CD4-positive, alpha-beta memory T cell (primary cell): ENCODE measurements at regions of chr6 and their contacts with region 1.

Region 1: GRCh38 chr6:391559-392440 is at the start of gene IRF4:
- DNase-seq: peak in 3 of 5 donors; percentile 19 to 26 (median 22)
- H3K4me3 ChIP-seq: peak within 1 kb of the TSS; percentile 23 to 63
- H3K4me3 Mint-ChIP-seq: peak within 1 kb of the TSS; percentile 92 to 96 (median 94)
- H3K27ac ChIP-seq: peak within 1 kb of the TSS; percentile 32
- H3K27ac Mint-ChIP-seq: peak within 1 kb of the TSS; percentile 57 to 90 (median 80)
- H3K4me1 ChIP-seq: peaks cover 36% of the 10 kb centered on the region
- H3K4me1 Mint-ChIP-seq: peaks cover 24 to 41% (median 27%) of the 10 kb centered on the region in 4 donors
- H3K27me3 ChIP-seq: no peaks in the 10 kb centered on the region
- H3K27me3 Mint-ChIP-seq: peaks cover 4 to 15% of the 10 kb centered on the region in 2 donors
- total RNA-seq, gene IRF4: 8.5 to 8.6 TPM

Region 2: DNA sequence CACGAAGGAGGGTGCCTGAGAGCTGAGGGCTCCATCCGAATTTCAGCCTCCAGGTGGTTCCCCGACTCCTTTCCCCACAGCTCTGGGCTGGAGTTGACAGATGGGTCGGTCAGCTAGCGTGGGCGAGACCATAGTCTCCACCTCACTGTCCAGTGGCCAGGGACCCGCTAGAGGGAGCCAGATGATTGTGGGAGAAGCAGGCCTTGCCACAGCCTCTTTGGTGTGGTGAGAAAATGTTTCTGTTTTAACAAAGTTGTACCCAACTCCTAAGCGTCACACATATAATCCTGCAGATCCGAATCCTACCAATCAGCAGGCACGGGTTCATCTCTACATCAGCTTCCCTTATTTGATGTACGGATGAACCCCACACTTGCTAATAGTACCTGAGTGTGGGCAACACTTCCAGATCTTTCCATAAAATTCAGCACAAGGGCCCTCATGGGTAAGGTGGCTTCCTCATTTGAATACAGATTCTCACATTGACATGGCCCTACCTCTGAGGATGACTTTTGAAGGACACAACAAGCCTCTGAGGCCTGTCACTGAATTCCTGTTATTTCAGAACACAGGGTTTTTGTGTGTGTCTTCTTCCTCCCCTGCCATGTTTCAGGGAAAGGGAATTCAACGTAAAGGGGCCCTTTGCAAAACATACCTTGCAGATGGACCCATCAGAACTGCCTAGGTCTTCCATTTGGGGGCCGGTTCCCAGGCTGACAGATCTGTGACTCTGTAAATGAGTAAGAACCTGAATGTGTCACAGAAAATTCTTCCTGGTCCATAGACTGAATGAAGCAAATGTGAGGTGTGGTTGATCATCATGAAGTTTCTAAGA is 202.8 kb before region 1 on chr6:
- CTCF ChIA-PET with region 1: interaction called, 10 read pairs
- POLR2A ChIA-PET with region 1: interaction called, 5 read pairs
- intact Hi-C with region 1: loop called (anchors 1 kb)
- DNase-seq: peak; percentile 70 to 74 (median 71)
- H3K4me3 ChIP-seq: no peak overlapping the region
- H3K4me3 Mint-ChIP-seq: peak overlapping the region in 2 of 8 donors; percentile 22 to 26
- H3K27ac ChIP-seq: no peak overlapping the region
- H3K27ac Mint-ChIP-seq: peak overlapping the region in 3 of 7 donors; percentile 35 to 43 (median 36)
- H3K4me1 ChIP-seq: peaks cover 19% of the 10 kb centered on the region
- H3K4me1 Mint-ChIP-seq: peaks cover 23 to 37% (median 31%) of the 10 kb centered on the region in 4 donors
- H3K27me3 ChIP-seq: no peaks in the 10 kb centered on the region
- H3K27me3 Mint-ChIP-seq: no peaks in the 10 kb centered on the region

Region 3: GRCh38 chr6:446418-447366 is 54.9 kb after region 1 on chr6:
- CTCF ChIA-PET with region 1: interaction called, 16 read pairs
- POLR2A ChIA-PET with region 1: interaction called, 47 read pairs
- intact Hi-C with region 1: loop called (anchors 1 kb)
- DNase-seq: peak; percentile 67 to 96 (median 76)
- H3K4me3 ChIP-seq: peak overlapping the region; percentile 28 to 60
- H3K4me3 Mint-ChIP-seq: peak overlapping the region; percentile 78 to 92 (median 82)
- H3K27ac ChIP-seq: peak overlapping the region; percentile 54
- H3K27ac Mint-ChIP-seq: peak overlapping the region; percentile 81 to 95 (median 88)
- H3K4me1 ChIP-seq: peaks cover 53% of the 10 kb centered on the region
- H3K4me1 Mint-ChIP-seq: peaks cover 33 to 54% (median 48%) of the 10 kb centered on the region in 4 donors
- H3K27me3 ChIP-seq: no peaks in the 10 kb centered on the region
- H3K27me3 Mint-ChIP-seq: peaks cover 0 to 2% of the 10 kb centered on the region in 2 donors

Region 4: DNA sequence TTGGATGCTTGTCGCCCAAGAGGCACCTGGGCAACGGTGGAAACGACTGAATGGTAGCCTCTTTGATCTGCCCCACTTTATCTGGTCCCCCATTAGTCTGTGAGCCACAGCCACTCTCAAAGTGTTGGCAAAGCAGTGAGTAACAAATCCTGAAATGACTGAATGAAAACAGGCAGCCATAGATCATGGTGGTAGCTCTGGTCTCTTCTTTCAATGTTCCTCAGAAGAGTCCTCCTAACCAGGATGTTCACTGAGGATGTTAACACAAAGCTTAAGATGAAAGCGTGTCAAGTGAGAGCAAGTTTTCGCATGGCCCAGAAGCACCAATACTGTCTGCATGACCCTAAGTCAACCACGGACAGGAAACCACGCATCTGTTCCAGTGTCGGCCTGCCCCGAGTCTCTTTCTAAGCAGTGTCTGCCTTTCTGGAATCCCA is 107.0 kb after region 1 on chr6:
- CTCF ChIA-PET with region 1: interaction called, 5 read pairs
- POLR2A ChIA-PET with region 1: interaction called, 7 read pairs
- intact Hi-C with region 1: loop called (anchors 5 kb)
- DNase-seq: peak in 1 of 5 donors; percentile 70
- H3K4me3 ChIP-seq: peak overlapping the region in 1 of 2 donors; percentile 25
- H3K4me3 Mint-ChIP-seq: peak overlapping the region; percentile 55 to 83 (median 76)
- H3K27ac ChIP-seq: peak overlapping the region; percentile 19
- H3K27ac Mint-ChIP-seq: peak overlapping the region; percentile 19 to 94 (median 84)
- H3K4me1 ChIP-seq: peaks cover 51% of the 10 kb centered on the region
- H3K4me1 Mint-ChIP-seq: peaks cover 45 to 70% (median 59%) of the 10 kb centered on the region in 4 donors
- H3K27me3 ChIP-seq: no peaks in the 10 kb centered on the region
- H3K27me3 Mint-ChIP-seq: no peaks in the 10 kb centered on the region

Region 5: DNA sequence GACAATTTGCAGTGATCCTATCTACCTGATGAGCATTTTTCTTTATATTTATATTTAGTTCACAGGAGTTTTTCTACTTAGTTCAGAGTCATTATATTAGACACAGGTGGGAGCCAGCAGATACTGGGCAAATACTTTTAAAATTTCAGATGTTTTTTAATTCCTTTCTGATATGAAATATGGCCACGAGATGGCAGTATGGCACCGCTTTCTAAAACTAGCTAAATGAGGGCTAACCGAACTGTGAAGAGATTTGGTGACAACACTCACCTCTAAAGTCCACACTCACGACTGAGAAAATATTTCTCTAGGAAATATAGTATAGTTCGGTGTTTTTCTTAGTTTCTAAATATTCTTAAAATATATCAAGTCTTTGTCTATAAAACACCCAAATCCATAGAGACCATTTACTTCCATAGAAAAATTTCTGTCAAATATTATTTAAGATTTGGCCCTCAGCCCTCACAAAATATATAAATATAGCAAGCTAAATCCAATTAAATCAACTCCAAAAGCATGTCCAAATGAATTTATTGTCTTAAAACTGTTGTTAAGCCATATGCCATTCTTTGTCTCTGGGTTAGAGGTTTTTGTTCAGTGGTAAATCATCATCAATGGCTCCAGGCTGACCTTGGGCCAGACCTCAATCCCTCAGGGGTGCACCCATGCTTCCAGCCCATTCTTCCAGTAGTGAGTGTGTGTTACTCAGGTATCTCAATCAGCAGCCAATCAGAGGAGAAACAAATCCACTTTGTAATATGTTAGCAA is 201.5 kb after region 1 on chr6:
- CTCF ChIA-PET with region 1: interaction called, 7 read pairs
- POLR2A ChIA-PET with region 1: interaction called, 5 read pairs
- intact Hi-C with region 1: loop called (anchors 2 kb)
- DNase-seq: peak; percentile 52 to 65 (median 59)
- H3K4me3 ChIP-seq: no peak overlapping the region
- H3K4me3 Mint-ChIP-seq: no peak overlapping the region
- H3K27ac ChIP-seq: no peak overlapping the region
- H3K27ac Mint-ChIP-seq: peak overlapping the region in 2 of 7 donors; percentile 8 to 13
- H3K4me1 ChIP-seq: no peaks in the 10 kb centered on the region
- H3K4me1 Mint-ChIP-seq: peaks cover 0 to 4% (median 3%) of the 10 kb centered on the region in 4 donors
- H3K27me3 ChIP-seq: no peaks in the 10 kb centered on the region
- H3K27me3 Mint-ChIP-seq: no peaks in the 10 kb centered on the region

Region 6: DNA sequence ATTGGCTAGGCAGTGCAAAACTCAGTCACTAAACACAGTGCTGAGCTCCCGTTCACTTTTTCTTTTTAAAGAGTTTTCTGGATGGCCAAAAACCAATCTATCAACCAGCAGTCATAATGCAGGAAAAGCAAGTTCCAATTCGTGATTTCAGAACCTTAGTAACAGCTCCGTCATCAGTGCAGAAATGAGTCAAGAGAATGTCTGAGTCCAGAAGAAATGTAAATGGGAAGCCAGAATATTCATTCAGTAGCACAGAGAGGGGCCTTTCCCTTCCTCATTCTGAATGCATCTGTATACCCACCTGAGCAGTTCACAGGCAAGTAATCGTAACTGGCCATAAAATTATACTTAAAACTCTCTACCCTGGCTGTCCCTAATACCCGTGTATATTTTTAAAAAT is 244.7 kb after region 1 on chr6:
- CTCF ChIA-PET with region 1: no interaction called
- POLR2A ChIA-PET with region 1: no interaction called
- intact Hi-C with region 1: no loop called
- DNase-seq: no peak
- H3K4me3 ChIP-seq: no peak overlapping the region
- H3K4me3 Mint-ChIP-seq: no peak overlapping the region
- H3K27ac ChIP-seq: no peak overlapping the region
- H3K27ac Mint-ChIP-seq: peak overlapping the region in 1 of 7 donors; percentile 49
- H3K4me1 ChIP-seq: no peaks in the 10 kb centered on the region
- H3K4me1 Mint-ChIP-seq: peaks cover 5 to 24% (median 19%) of the 10 kb centered on the region in 4 donors
- H3K27me3 ChIP-seq: no peaks in the 10 kb centered on the region
- H3K27me3 Mint-ChIP-seq: no peaks in the 10 kb centered on the region

Region 7: GRCh38 chr6:722077-722524 is 330.3 kb after region 1 on chr6:
- CTCF ChIA-PET with region 1: interaction called, 3 read pairs
- POLR2A ChIA-PET with region 1: no interaction called
- intact Hi-C with region 1: loop called (anchors 1 kb)
- DNase-seq: peak; percentile 55 to 69 (median 58)
- H3K4me3 ChIP-seq: no peak overlapping the region
- H3K4me3 Mint-ChIP-seq: peak overlapping the region in 2 of 8 donors; percentile 7 to 52
- H3K27ac ChIP-seq: no peak overlapping the region
- H3K27ac Mint-ChIP-seq: no peak overlapping the region
- H3K4me1 ChIP-seq: peaks cover 7% of the 10 kb centered on the region
- H3K4me1 Mint-ChIP-seq: peaks cover 0 to 9% (median 4%) of the 10 kb centered on the region in 4 donors
- H3K27me3 ChIP-seq: no peaks in the 10 kb centered on the region
- H3K27me3 Mint-ChIP-seq: peaks cover 8 to 10% of the 10 kb centered on the region in 2 donors

Region 8: DNA sequence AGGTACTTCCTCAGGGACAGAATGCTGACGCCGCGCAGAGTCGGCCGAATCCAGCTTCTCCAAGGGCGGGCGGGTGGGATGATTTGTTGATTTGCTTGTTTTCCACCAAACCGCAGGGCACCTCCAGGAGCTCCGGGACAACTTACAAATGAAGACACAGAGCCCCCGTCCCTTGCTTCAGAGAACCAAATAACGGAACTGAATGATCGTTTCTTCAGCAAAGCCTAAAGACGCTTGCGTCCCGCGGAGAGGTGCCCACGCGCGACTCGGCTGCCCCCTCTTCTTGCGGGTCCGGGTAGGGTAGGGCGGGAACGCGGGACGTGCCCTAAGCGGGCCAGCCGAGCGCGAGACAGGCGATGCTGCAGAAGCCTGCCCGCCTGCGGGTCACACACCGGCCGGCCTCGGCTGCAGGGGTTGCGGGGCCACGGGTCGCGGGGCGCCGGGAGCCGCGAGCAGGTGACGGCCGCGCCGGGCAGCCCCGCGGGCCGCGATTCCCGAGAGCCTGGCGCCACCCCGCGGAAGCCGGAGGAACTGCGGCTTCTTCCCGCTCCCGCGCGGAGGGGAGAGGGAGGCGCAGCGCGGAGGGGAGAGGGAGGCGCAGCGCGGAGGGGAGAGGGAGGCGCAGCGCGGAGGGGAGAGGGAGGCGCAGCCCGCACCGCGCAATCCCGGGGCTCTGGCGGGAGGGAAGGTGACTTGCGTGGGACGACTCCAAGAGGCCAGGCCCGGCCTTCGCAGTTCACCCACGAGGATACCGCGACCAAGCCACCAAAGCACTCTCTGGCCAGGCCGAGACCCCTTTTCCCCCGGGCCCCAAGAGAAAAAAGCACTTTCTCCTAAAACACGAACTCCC is 989.9 kb after region 1 on chr6:
- CTCF ChIA-PET with region 1: no interaction called
- POLR2A ChIA-PET with region 1: no interaction called
- intact Hi-C with region 1: loop called (anchors 5 kb)
- DNase-seq: peak in 4 of 5 donors; percentile 36 to 57 (median 48)
- H3K4me3 ChIP-seq: no peak overlapping the region
- H3K4me3 Mint-ChIP-seq: peak overlapping the region in 6 of 8 donors; percentile 21 to 74 (median 55)
- H3K27ac ChIP-seq: no peak overlapping the region
- H3K27ac Mint-ChIP-seq: no peak overlapping the region
- H3K4me1 ChIP-seq: peaks cover 38% of the 10 kb centered on the region
- H3K4me1 Mint-ChIP-seq: peaks cover 15 to 41% (median 33%) of the 10 kb centered on the region in 4 donors
- H3K27me3 ChIP-seq: peaks cover 41% of the 10 kb centered on the region
- H3K27me3 Mint-ChIP-seq: peaks cover 42 to 51% of the 10 kb centered on the region in 2 donors